ENCODE measurements at regions of chr2 and their contacts with region 1.

Region 1: GRCh38 chr2:169573160-169573973 is at the start of gene FASTKD1:
- DNase-seq: peak; percentile 94
- ATAC-seq: peak; percentile 98
- H3K4me3 Mint-ChIP-seq: peak within 1 kb of the TSS; percentile 98
- H3K27ac Mint-ChIP-seq: peak within 1 kb of the TSS; percentile 95
- H3K4me1 Mint-ChIP-seq: peaks cover 24% of the 10 kb centered on the region
- H3K27me3 Mint-ChIP-seq: no peaks in the 10 kb centered on the region
- CTCF ChIP-seq: no peak
- total RNA-seq, gene FASTKD1: 55.4 to 60.2 TPM

Region 2: GRCh38 chr2:169406891-169407290 is 166.5 kb before region 1 on chr2:
- CTCF ChIA-PET with region 1: no interaction called
- POLR2A ChIA-PET with region 1: no interaction called
- intact Hi-C with region 1: no loop called
- DNase-seq: no peak
- ATAC-seq: no peak
- H3K4me3 Mint-ChIP-seq: no peak overlapping the region
- H3K27ac Mint-ChIP-seq: no peak overlapping the region
- H3K4me1 Mint-ChIP-seq: no peaks in the 10 kb centered on the region
- H3K27me3 Mint-ChIP-seq: peaks cover 9% of the 10 kb centered on the region
- CTCF ChIP-seq: no peak

Region 3: GRCh38 chr2:169540146-169540545 is 33.2 kb before region 1 on chr2:
- CTCF ChIA-PET with region 1: no interaction called
- POLR2A ChIA-PET with region 1: no interaction called
- intact Hi-C with region 1: no loop called
- DNase-seq: no peak
- ATAC-seq: no peak
- H3K4me3 Mint-ChIP-seq: no peak overlapping the region
- H3K27ac Mint-ChIP-seq: no peak overlapping the region
- H3K4me1 Mint-ChIP-seq: no peaks in the 10 kb centered on the region
- H3K27me3 Mint-ChIP-seq: no peaks in the 10 kb centered on the region
- CTCF ChIP-seq: no peak

Region 4: GRCh38 chr2:169584005-169584877 is 10.9 kb after region 1 on chr2 and contains the start of gene PPIG:
- CTCF ChIA-PET with region 1: interaction called, 3 read pairs
- POLR2A ChIA-PET with region 1: interaction called, 19 read pairs
- intact Hi-C with region 1: no loop called
- DNase-seq: peak; percentile 95
- ATAC-seq: peak; percentile 95
- H3K4me3 Mint-ChIP-seq: peak within 1 kb of the TSS; percentile 99
- H3K27ac Mint-ChIP-seq: peak within 1 kb of the TSS; percentile 99
- H3K4me1 Mint-ChIP-seq: peaks cover 28% of the 10 kb centered on the region
- H3K27me3 Mint-ChIP-seq: no peaks in the 10 kb centered on the region
- CTCF ChIP-seq: no peak
- total RNA-seq, gene PPIG: 54.9 to 62.0 TPM